ENCODE measurements at regions of chr14 and their contacts with region 1.

Region 1: GRCh38 chr14:22570132-22570949 is 18.7 kb downstream of the DAD1 start:
- DNase-seq: peak; percentile 69 to 99 (median 85)
- ATAC-seq: peak; percentile 87
- H3K4me3 ChIP-seq: peak overlapping the region; percentile 34 to 38
- H3K4me3 Mint-ChIP-seq: peak overlapping the region; percentile 73
- H3K27ac ChIP-seq: peak overlapping the region; percentile 58 to 97
- H3K27ac Mint-ChIP-seq: peak overlapping the region; percentile 97
- H3K4me1 ChIP-seq: peaks cover 51% of the 10 kb centered on the region
- H3K4me1 Mint-ChIP-seq: peaks cover 54% of the 10 kb centered on the region
- H3K27me3 ChIP-seq: no peaks in the 10 kb centered on the region
- H3K27me3 Mint-ChIP-seq: no peaks in the 10 kb centered on the region
- CTCF ChIP-seq: peak; percentile 99

Region 2: GRCh38 chr14:21734457-21735074 is 835.8 kb before region 1 on chr14:
- CTCF ChIA-PET with region 1: interaction called, 3 read pairs
- POLR2A ChIA-PET with region 1: no interaction called
- intact Hi-C with region 1: loop called in 1 of 2 experiments (anchors 5 kb)
- DNase-seq: peak in 5 of 9 experiments; percentile 11 to 83 (median 49)
- ATAC-seq: peak; percentile 37
- H3K4me3 ChIP-seq: no peak overlapping the region
- H3K4me3 Mint-ChIP-seq: peak overlapping the region; percentile 45
- H3K27ac ChIP-seq: no peak overlapping the region
- H3K27ac Mint-ChIP-seq: peak overlapping the region; percentile 37
- H3K4me1 ChIP-seq: no peaks in the 10 kb centered on the region
- H3K4me1 Mint-ChIP-seq: peaks cover 18% of the 10 kb centered on the region
- H3K27me3 ChIP-seq: no peaks in the 10 kb centered on the region
- H3K27me3 Mint-ChIP-seq: peaks cover 33% of the 10 kb centered on the region
- CTCF ChIP-seq: peak; percentile 75

Region 3: GRCh38 chr14:22163051-22163450 is 407.3 kb before region 1 on chr14:
- CTCF ChIA-PET with region 1: interaction called, 7 read pairs
- POLR2A ChIA-PET with region 1: interaction called, 5 read pairs
- intact Hi-C with region 1: loop called in 1 of 2 experiments (anchors 1 kb)
- DNase-seq: peak in 2 of 9 experiments; percentile 26 to 49
- ATAC-seq: peak; percentile 56
- H3K4me3 ChIP-seq: no peak overlapping the region
- H3K4me3 Mint-ChIP-seq: peak overlapping the region; percentile 84
- H3K27ac ChIP-seq: no peak overlapping the region
- H3K27ac Mint-ChIP-seq: peak overlapping the region; percentile 92
- H3K4me1 ChIP-seq: no peaks in the 10 kb centered on the region
- H3K4me1 Mint-ChIP-seq: peaks cover 16% of the 10 kb centered on the region
- H3K27me3 ChIP-seq: no peaks in the 10 kb centered on the region
- H3K27me3 Mint-ChIP-seq: no peaks in the 10 kb centered on the region
- CTCF ChIP-seq: no peak

Region 4: DNA sequence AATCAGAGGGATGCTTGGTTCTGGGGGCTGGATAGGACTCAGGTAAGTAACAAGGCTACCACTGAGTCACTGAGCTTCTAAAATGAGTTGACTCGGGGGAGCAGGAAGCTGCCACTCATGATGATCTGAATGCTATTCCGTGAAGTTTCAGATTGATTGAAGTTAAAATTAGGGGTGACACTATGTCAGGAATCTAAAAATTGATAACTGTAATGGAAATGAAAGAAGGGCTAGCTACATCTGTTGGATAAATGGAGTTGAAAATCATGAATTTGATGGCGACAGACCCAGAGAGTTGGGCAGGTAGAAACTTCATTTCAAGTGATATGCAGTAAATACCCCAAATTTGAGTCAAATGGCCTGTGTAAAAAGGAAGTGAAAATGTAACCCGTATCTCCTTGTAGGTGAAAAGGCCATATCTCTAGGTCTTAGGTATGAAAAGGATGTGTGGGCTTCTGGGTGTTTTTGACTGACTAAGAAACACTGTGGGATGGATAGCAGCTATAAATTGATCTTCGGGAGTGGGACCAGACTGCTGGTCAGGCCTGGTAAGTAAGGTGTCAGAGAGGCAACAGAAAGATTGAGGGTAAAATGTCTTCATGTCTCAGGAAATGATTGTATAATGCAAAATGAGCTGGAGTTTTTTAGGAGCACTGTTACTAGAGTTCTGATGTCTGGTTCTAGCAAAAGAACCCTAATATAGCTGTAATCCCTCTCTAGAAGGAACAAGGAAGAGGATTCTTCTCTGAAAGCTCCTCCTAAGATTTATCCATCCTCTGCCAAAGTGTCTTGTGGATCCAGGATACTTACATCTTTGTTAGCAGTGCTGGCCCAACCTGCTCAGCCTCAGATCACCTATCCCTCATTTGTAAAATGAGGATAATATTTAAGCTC is 38.6 kb before region 1 on chr14:
- CTCF ChIA-PET with region 1: interaction called, 53 read pairs
- POLR2A ChIA-PET with region 1: interaction called, 6 read pairs
- intact Hi-C with region 1: no loop called
- DNase-seq: peak in 2 of 9 experiments; percentile 44 to 70
- ATAC-seq: peak; percentile 62
- H3K4me3 ChIP-seq: peak overlapping the region; percentile 38 to 43
- H3K4me3 Mint-ChIP-seq: peak overlapping the region; percentile 81
- H3K27ac ChIP-seq: peak overlapping the region; percentile 54 to 83
- H3K27ac Mint-ChIP-seq: peak overlapping the region; percentile 97
- H3K4me1 ChIP-seq: peaks cover 94% of the 10 kb centered on the region
- H3K4me1 Mint-ChIP-seq: peaks cover 90% of the 10 kb centered on the region
- H3K27me3 ChIP-seq: no peaks in the 10 kb centered on the region
- H3K27me3 Mint-ChIP-seq: no peaks in the 10 kb centered on the region
- CTCF ChIP-seq: no peak

Region 5: DNA sequence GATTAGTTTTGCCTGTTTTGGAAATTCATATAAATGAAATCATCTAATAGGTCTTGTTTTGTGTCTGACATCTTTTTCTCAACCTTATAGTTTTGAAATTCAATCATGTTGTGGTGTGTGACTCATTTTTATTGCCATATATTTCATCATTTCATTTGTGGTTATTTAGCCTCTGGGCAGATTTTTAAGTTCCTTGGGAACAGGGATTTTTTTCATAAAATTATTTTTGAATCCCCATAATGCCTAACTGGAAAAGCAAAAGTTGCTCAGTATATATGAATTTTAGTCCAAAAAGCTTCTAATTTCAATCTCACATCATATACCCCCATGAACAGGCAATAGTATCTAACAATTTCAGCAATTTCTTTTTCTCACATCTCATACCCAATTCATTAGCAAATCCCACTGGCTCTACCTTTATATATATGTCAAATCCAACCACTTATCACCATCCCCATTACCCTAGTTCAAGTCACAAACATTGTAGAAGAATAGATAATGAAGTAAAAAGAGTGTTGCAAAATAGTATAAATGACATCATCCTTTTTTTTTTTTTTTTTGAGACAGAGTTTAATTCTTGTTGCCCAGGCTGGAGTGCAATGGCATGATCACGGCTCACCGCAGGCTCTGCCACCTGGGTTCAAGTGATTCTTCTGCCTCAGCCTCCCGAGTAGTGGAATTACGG is 76.4 kb after region 1 on chr14:
- CTCF ChIA-PET with region 1: interaction called, 89 read pairs
- POLR2A ChIA-PET with region 1: no interaction called
- intact Hi-C with region 1: loop called in 1 of 2 experiments (anchors 2 kb)
- DNase-seq: no peak
- ATAC-seq: no peak
- H3K4me3 ChIP-seq: no peak overlapping the region
- H3K4me3 Mint-ChIP-seq: no peak overlapping the region
- H3K27ac ChIP-seq: no peak overlapping the region
- H3K27ac Mint-ChIP-seq: no peak overlapping the region
- H3K4me1 ChIP-seq: no peaks in the 10 kb centered on the region
- H3K4me1 Mint-ChIP-seq: peaks cover 3% of the 10 kb centered on the region
- H3K27me3 ChIP-seq: no peaks in the 10 kb centered on the region
- H3K27me3 Mint-ChIP-seq: no peaks in the 10 kb centered on the region
- CTCF ChIP-seq: no peak

Region 6: DNA sequence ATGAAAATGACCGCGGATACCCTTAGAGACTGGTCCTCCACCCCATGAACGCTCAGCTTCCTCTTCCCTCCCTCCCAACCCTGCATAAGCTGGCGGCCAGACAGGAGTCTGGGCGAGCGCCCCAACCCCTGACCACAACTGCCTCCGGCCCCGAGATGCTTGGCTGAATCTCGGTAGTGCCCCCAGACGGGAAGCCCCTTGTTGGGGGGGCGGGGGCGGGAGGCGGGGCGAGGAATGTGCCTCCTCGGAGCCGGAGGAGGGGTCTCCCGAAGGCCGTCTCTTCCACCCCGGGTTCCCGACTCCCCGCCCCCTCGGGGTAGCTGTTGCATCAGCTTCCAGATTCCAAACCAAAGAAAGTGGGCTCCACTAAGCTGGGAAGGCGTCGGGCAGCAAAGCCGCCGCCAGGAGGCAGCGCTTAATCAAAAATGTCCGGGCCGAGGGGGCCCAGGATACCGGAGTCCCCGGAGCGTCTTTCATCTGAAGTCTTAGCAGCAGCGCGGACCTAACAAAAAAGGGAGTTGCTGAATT is 252.3 kb after region 1 on chr14:
- CTCF ChIA-PET with region 1: interaction called, 42 read pairs
- POLR2A ChIA-PET with region 1: no interaction called
- intact Hi-C with region 1: loop called in 1 of 2 experiments (anchors 1 kb)
- DNase-seq: peak; percentile 41 to 85 (median 76)
- ATAC-seq: peak; percentile 89
- H3K4me3 ChIP-seq: peak overlapping the region; percentile 26 to 35
- H3K4me3 Mint-ChIP-seq: peak overlapping the region; percentile 61
- H3K27ac ChIP-seq: no peak overlapping the region
- H3K27ac Mint-ChIP-seq: no peak overlapping the region
- H3K4me1 ChIP-seq: peaks cover 10% of the 10 kb centered on the region
- H3K4me1 Mint-ChIP-seq: peaks cover 16% of the 10 kb centered on the region
- H3K27me3 ChIP-seq: peaks cover 4 to 21% of the 10 kb centered on the region in 2 experiments
- H3K27me3 Mint-ChIP-seq: peaks cover 23% of the 10 kb centered on the region
- CTCF ChIP-seq: peak; percentile 81

Region 7: GRCh38 chr14:22973217-22974032 is 403.1 kb after region 1 on chr14:
- CTCF ChIA-PET with region 1: interaction called, 10 read pairs
- POLR2A ChIA-PET with region 1: no interaction called
- intact Hi-C with region 1: no loop called
- DNase-seq: peak in 7 of 9 experiments; percentile 30 to 70 (median 45)
- ATAC-seq: peak; percentile 52
- H3K4me3 ChIP-seq: no peak overlapping the region
- H3K4me3 Mint-ChIP-seq: no peak overlapping the region
- H3K27ac ChIP-seq: no peak overlapping the region
- H3K27ac Mint-ChIP-seq: no peak overlapping the region
- H3K4me1 ChIP-seq: no peaks in the 10 kb centered on the region
- H3K4me1 Mint-ChIP-seq: no peaks in the 10 kb centered on the region
- H3K27me3 ChIP-seq: no peaks in the 10 kb centered on the region
- H3K27me3 Mint-ChIP-seq: peaks cover 2% of the 10 kb centered on the region
- CTCF ChIP-seq: peak; percentile 64